ENCODE measurements at regions of chrX and their contacts with region 1.

Region 1: GRCh38 chrX:119482481-119483480 is 14.5 kb downstream of the SLC25A5 start:
- DNase-seq: no peak
- ATAC-seq: peak; percentile 90
- H3K4me3 ChIP-seq: peak overlapping the region; percentile 19 to 35; a peak in 2 of 4 replicates
- H3K27ac ChIP-seq: peak overlapping the region; percentile 44; the same call in 1 of the 2 replicates
- H3K4me1 ChIP-seq: peaks cover 0 to 27% of the 10 kb centered on the region in 2 experiments; a peak in 3 of 4 replicates
- H3K27me3 ChIP-seq: no peaks in the 10 kb centered on the region
- CTCF ChIP-seq: peak; percentile 55 to 67 (median 67); a peak in 5 of 6 replicates
- POLR2A ChIP-seq: no peak
- RAD21 ChIP-seq: peak; percentile 51

Region 2: GRCh38 chrX:119495734-119496726 is 13.2 kb after region 1 on chrX:
- CTCF ChIA-PET with region 1: interaction called, 16 read pairs
- POLR2A ChIA-PET with region 1: no interaction called
- RAD21 ChIA-PET with region 1: no interaction called
- intact Hi-C with region 1: no loop called
- DNase-seq: no peak
- ATAC-seq: no peak
- H3K4me3 ChIP-seq: no peak overlapping the region
- H3K27ac ChIP-seq: no peak overlapping the region
- H3K4me1 ChIP-seq: peaks cover 0 to 9% of the 10 kb centered on the region in 2 experiments; a peak in 2 of 4 replicates
- H3K27me3 ChIP-seq: no peaks in the 10 kb centered on the region
- CTCF ChIP-seq: no peak
- POLR2A ChIP-seq: no peak
- RAD21 ChIP-seq: no peak

Region 3: GRCh38 chrX:119685225-119686066 is 202.7 kb after region 1 on chrX:
- CTCF ChIA-PET with region 1: no interaction called
- POLR2A ChIA-PET with region 1: no interaction called
- RAD21 ChIA-PET with region 1: no interaction called
- intact Hi-C with region 1: no loop called
- DNase-seq: no peak
- ATAC-seq: no peak
- H3K4me3 ChIP-seq: no peak overlapping the region
- H3K27ac ChIP-seq: no peak overlapping the region
- H3K4me1 ChIP-seq: no peaks in the 10 kb centered on the region
- H3K27me3 ChIP-seq: no peaks in the 10 kb centered on the region
- CTCF ChIP-seq: no peak
- POLR2A ChIP-seq: no peak
- RAD21 ChIP-seq: no peak